ENCODE measurements at regions of chr17 and their contacts with region 1.

Region 1: DNA sequence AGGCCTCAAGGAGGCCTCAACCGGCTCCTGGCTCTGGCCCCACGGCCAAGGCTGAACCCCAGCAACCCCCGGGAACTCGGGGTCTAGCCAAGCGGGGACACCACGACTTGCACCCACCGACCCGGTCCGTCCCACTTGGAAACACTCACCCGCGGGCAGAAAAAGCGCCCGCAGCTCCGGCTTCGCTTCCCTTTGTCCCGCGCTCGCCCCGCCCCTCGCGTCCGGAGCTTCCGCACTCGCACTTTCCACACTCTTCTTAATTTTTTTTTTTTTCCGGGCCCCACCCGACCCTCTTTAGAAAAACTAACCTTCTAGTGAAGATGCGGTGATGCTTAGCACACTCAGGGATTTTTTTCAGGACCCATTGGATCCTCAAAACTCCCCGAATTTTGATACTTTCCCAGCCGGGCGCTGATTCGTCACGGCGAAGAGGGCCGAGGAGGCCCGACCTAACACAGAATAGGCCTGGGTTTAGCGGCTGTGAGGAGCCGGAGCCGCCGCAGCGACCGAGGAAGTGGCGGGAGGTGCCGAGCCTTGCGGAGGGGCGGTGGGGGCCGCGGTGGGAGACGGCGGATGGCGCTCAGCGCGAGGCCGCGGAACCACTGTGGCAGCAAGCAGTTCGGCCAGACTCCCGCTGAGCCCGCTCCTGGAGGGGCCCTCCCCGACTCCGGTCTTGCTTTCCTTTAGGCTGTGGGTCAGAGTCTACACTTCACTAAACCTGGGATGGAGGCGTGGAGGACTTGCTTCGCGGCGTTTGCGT is at the start of gene SMARCE1:
- DNase-seq: peak; percentile 78
- ATAC-seq: peak; percentile 79
- H3K4me3 Mint-ChIP-seq: peak within 1 kb of the TSS; percentile 96
- H3K27ac Mint-ChIP-seq: peak within 1 kb of the TSS; percentile 97
- H3K4me1 Mint-ChIP-seq: peaks cover 45% of the 10 kb centered on the region
- H3K27me3 Mint-ChIP-seq: no peaks in the 10 kb centered on the region
- total RNA-seq, gene SMARCE1: 104 to 110 TPM

Region 2: GRCh38 chr17:40564883-40565768 is 82.7 kb before region 1 on chr17 and contains the start of gene CCR7:
- CTCF ChIA-PET with region 1: interaction called, 63 read pairs
- POLR2A ChIA-PET with region 1: interaction called, 16 read pairs
- DNase-seq: peak; percentile 92
- ATAC-seq: peak; percentile 45
- H3K4me3 Mint-ChIP-seq: peak within 1 kb of the TSS; percentile 86
- H3K27ac Mint-ChIP-seq: peak within 1 kb of the TSS; percentile 93
- H3K4me1 Mint-ChIP-seq: peaks cover 64% of the 10 kb centered on the region
- H3K27me3 Mint-ChIP-seq: no peaks in the 10 kb centered on the region
- total RNA-seq, gene CCR7: 171 to 173 TPM

Region 3: GRCh38 chr17:40633871-40634270 is 13.9 kb before region 1 on chr17:
- CTCF ChIA-PET with region 1: interaction called, 14 read pairs
- POLR2A ChIA-PET with region 1: interaction called, 3 read pairs
- DNase-seq: no peak
- ATAC-seq: no peak
- H3K4me3 Mint-ChIP-seq: no peak overlapping the region
- H3K27ac Mint-ChIP-seq: peak overlapping the region; percentile 12
- H3K4me1 Mint-ChIP-seq: peaks cover 7% of the 10 kb centered on the region
- H3K27me3 Mint-ChIP-seq: no peaks in the 10 kb centered on the region

Measured in activated CD8-positive, alpha-beta T cell treated with anti-CD3 and anti-CD28 coated beads, Interleukin-2, amount 10 ng/mL, durations not matched to agents 7 days and 5 days (primary cell).